Caco-2 (cell line): ENCODE measurements at regions of chr10 and their contacts with region 1.

Region 1: DNA sequence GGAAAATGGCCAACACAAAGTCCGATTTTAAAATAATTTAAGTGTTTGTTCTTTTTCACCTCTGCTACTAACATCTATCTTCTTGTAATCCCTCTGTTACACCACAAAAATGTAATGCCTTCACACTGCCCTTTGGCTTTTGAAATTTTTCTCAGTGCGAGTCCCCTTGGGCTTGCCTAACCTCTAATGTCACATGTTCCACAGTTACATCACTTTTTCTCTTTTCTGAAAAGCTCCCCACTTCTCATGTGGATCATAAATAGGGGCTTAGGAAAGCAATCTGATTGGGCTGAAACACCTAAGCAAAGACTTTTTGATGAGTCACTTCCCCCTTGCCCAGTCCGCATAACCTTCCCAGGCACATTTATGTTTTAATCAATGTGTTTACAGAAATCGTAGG is 288.2 kb downstream of the IPMK start:
- DNase-seq: peak in 1 of 2 experiments; percentile 40
- H3K4me3 ChIP-seq: no peak overlapping the region
- H3K4me3 Mint-ChIP-seq: no peak overlapping the region
- H3K27ac Mint-ChIP-seq: peak overlapping the region; percentile 37
- H3K4me1 ChIP-seq: peaks cover 39% of the 10 kb centered on the region
- H3K4me1 Mint-ChIP-seq: peaks cover 42% of the 10 kb centered on the region
- H3K27me3 ChIP-seq: no peaks in the 10 kb centered on the region
- H3K27me3 Mint-ChIP-seq: no peaks in the 10 kb centered on the region
- CTCF ChIP-seq: no peak

Region 2: DNA sequence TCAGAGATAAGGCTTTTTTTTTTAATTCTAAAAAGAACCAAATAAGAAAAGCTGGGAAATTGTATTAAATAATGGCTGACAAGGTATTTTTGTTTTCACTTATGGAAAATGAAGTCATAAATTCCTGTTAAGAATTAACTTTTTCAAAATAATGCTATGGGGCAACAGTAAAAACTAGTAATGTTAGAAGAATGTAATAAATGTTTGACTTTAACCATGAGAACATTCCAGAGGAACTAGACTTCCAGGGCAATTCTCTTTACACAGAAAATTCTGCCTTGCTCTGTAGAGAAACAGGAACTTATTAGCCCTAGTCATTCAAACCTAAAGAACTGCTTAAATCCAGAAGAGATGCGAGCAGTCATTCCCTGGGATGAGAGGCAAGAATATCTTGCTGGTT is 282.8 kb before region 1 on chr10:
- CTCF ChIA-PET with region 1: no interaction called
- POLR2A ChIA-PET with region 1: no interaction called
- intact Hi-C with region 1: loop called (anchors 2 kb)
- DNase-seq: peak in 1 of 2 experiments; percentile 52
- H3K4me3 ChIP-seq: no peak overlapping the region
- H3K4me3 Mint-ChIP-seq: peak overlapping the region; percentile 24
- H3K27ac Mint-ChIP-seq: peak overlapping the region; percentile 89
- H3K4me1 ChIP-seq: peaks cover 47% of the 10 kb centered on the region
- H3K4me1 Mint-ChIP-seq: peaks cover 32% of the 10 kb centered on the region
- H3K27me3 ChIP-seq: no peaks in the 10 kb centered on the region
- H3K27me3 Mint-ChIP-seq: no peaks in the 10 kb centered on the region
- CTCF ChIP-seq: no peak

Region 3: GRCh38 chr10:58291538-58292174 is 312.2 kb after region 1 on chr10:
- CTCF ChIA-PET with region 1: no interaction called
- POLR2A ChIA-PET with region 1: no interaction called
- intact Hi-C with region 1: no loop called
- DNase-seq: peak; percentile 58 to 79
- H3K4me3 ChIP-seq: no peak overlapping the region
- H3K4me3 Mint-ChIP-seq: no peak overlapping the region
- H3K27ac Mint-ChIP-seq: no peak overlapping the region
- H3K4me1 ChIP-seq: no peaks in the 10 kb centered on the region
- H3K4me1 Mint-ChIP-seq: peaks cover 6% of the 10 kb centered on the region
- H3K27me3 ChIP-seq: no peaks in the 10 kb centered on the region
- H3K27me3 Mint-ChIP-seq: no peaks in the 10 kb centered on the region
- CTCF ChIP-seq: peak; percentile 94 to 96

Region 4: DNA sequence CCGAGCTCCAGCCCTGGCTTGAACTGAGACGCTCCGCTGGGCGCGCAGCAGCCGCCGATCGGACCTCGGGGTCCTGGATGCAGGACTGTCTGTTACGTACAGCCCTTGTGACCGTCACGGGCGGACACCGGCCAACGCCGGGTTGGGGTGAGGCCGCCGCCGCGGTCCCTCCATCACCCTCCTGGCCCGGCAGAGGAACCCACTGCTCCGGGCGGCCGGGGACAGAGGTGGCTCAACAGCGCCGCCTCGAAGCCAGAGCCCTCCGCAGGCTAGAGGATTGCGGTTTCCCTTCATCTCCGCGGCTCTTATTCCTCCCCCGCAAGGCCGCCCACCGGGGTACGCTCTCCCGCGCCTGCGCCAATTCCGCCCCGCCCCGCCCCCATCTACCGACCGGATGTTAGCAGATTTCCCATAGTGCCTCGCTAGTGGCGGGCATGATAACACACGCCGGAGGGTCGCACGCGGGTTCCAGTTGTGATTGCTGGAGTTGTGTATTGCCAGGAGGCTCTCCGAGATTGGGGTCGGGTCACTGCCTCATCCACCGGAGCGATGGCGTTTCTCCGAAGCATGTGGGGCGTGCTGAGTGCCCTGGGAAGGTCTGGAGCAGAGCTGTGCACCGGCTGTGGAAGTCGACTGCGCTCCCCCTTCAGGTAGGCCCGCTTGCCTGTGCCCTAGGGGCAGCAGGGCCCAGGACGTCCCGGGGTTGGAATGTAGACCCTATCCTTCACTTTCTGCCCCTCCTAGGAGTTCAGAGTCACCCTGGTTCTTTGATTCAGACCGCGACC is 405.7 kb after region 1 on chr10 and contains the start of gene TFAM:
- CTCF ChIA-PET with region 1: no interaction called
- POLR2A ChIA-PET with region 1: no interaction called
- intact Hi-C with region 1: no loop called
- DNase-seq: peak; percentile 99 to 100
- H3K4me3 ChIP-seq: peak within 1 kb of the TSS; percentile 83
- H3K4me3 Mint-ChIP-seq: peak within 1 kb of the TSS; percentile 87
- H3K27ac Mint-ChIP-seq: peak within 1 kb of the TSS; percentile 80
- H3K4me1 ChIP-seq: no peaks in the 10 kb centered on the region; the same call in 1 of the 2 replicates
- H3K4me1 Mint-ChIP-seq: peaks cover 9% of the 10 kb centered on the region
- H3K27me3 ChIP-seq: no peaks in the 10 kb centered on the region
- H3K27me3 Mint-ChIP-seq: no peaks in the 10 kb centered on the region
- CTCF ChIP-seq: peak; percentile 71 to 98
- total RNA-seq, gene TFAM: 228 and 240 TPM in 2 replicates